ENCODE measurements at regions of chr12 and their contacts with region 1.

Region 1: GRCh38 chr12:67807814-67808213 is 159.3 kb downstream of the DYRK2 start:
- DNase-seq: no peak
- H3K4me3 ChIP-seq: no peak overlapping the region
- H3K27ac ChIP-seq: no peak overlapping the region
- H3K4me1 ChIP-seq: no peaks in the 10 kb centered on the region
- H3K27me3 ChIP-seq: no peaks in the 10 kb centered on the region
- CTCF ChIP-seq: no peak
- POLR2A ChIP-seq: no peak

Region 2: DNA sequence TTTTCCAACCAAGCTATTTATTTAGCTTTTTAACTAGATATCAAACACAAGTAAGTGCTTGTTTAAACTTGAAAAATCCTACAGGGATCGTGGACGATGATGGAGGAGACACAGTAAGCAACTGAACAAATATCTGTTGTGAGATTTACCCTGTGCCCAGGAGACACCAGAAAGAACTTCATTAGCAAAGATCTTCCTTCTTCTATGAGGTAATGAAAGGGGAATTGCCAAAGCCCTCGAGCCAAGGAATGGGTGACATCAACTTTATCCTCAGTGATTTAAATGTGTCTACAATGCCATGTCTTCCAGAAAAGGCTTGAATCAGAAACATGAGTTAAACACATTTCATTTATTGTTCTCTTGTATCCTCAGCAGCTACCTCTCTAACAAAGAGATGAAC is 873.1 kb before region 1 on chr12:
- intact Hi-C with region 1: loop called (anchors 5 kb)
- DNase-seq: no peak
- H3K4me3 ChIP-seq: no peak overlapping the region
- H3K27ac ChIP-seq: no peak overlapping the region
- H3K4me1 ChIP-seq: no peaks in the 10 kb centered on the region
- H3K27me3 ChIP-seq: no peaks in the 10 kb centered on the region
- CTCF ChIP-seq: no peak
- POLR2A ChIP-seq: no peak

Region 3: GRCh38 chr12:67735868-67736267 is 71.9 kb before region 1 on chr12:
- intact Hi-C with region 1: no loop called
- DNase-seq: no peak
- H3K4me3 ChIP-seq: no peak overlapping the region
- H3K27ac ChIP-seq: no peak overlapping the region
- H3K4me1 ChIP-seq: no peaks in the 10 kb centered on the region
- H3K27me3 ChIP-seq: no peaks in the 10 kb centered on the region
- CTCF ChIP-seq: no peak
- POLR2A ChIP-seq: no peak